HCT116 (cell line): ENCODE measurements at regions of chr1 and their contacts with region 1.

Region 1: DNA sequence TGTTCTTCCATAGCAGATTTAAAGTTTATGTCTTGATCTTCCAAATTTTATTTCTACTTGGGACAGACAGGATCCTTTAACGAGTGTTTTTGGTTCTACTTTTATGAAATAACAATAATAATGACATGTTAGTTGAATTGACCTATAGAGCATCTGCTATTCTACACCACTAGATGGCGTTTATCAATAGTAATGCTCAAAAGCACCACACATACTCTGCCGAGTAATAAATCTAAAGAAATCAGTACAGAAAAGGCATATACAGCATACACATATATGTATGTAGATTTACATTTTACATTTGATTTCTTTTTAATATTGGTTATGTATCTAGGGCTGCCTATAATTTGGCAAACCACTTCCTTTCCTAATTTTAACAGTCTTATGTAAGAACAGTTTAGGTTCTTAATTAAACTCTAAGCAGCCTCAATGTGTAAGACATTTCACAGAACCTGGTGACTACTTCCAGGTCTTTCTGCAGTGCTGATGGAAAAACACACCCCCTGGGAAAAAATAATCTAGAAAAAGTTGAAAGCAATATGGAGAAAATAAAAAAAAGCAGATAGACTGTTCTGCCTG is 5.9 kb upstream of the SIPA1L2 start:
- DNase-seq: no peak
- ATAC-seq: peak; percentile 91
- H3K4me3 ChIP-seq: no peak overlapping the region
- H3K27ac ChIP-seq: no peak overlapping the region
- H3K4me1 ChIP-seq: peaks cover 3 to 4% of the 10 kb centered on the region in 2 experiments; a peak in 3 of 4 replicates
- H3K27me3 ChIP-seq: no peaks in the 10 kb centered on the region
- CTCF ChIP-seq: peak; percentile 63 to 83 (median 67)
- POLR2A ChIP-seq: no peak
- RAD21 ChIP-seq: peak; percentile 83

Region 2: DNA sequence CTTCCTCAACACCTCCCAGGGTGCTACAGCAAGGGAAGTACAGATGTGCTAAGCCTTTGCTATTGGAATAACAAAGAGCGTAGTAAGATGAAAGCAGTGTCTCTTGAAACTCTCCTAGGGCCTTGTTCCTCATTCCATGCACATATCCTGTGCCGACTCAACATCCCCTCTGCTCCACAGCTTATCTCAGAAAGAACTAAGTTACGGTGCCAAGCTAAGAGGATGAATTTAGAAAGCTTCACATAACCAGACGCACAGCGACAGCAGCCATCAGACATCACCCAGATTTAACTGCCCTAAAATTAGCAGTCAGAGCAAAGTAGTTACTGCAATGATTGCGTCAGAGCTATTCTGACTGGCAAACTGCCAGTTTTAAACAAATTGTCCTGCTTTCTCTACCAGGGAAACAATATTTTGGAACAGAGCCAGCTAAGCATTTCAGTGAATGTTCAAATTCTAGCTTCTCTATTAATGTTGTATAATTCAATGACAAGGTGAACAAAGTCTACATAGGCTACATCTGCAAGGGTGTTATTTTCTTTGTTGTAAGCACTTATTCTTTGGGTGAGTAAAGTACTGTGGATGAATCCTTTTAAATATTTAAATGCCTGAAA is 15.4 kb before region 1 on chr1:
- CTCF ChIA-PET with region 1: no interaction called
- POLR2A ChIA-PET with region 1: no interaction called
- RAD21 ChIA-PET with region 1: no interaction called
- intact Hi-C with region 1: no loop called
- DNase-seq: no peak
- ATAC-seq: no peak
- H3K4me3 ChIP-seq: no peak overlapping the region
- H3K27ac ChIP-seq: no peak overlapping the region
- H3K4me1 ChIP-seq: peaks cover 32 to 60% of the 10 kb centered on the region in 2 experiments; a peak in 3 of 4 replicates
- H3K27me3 ChIP-seq: no peaks in the 10 kb centered on the region
- CTCF ChIP-seq: no peak
- POLR2A ChIP-seq: no peak
- RAD21 ChIP-seq: 0 out of 2 replicates have a peak, but pooled peaks have one; percentile 13

Region 3: DNA sequence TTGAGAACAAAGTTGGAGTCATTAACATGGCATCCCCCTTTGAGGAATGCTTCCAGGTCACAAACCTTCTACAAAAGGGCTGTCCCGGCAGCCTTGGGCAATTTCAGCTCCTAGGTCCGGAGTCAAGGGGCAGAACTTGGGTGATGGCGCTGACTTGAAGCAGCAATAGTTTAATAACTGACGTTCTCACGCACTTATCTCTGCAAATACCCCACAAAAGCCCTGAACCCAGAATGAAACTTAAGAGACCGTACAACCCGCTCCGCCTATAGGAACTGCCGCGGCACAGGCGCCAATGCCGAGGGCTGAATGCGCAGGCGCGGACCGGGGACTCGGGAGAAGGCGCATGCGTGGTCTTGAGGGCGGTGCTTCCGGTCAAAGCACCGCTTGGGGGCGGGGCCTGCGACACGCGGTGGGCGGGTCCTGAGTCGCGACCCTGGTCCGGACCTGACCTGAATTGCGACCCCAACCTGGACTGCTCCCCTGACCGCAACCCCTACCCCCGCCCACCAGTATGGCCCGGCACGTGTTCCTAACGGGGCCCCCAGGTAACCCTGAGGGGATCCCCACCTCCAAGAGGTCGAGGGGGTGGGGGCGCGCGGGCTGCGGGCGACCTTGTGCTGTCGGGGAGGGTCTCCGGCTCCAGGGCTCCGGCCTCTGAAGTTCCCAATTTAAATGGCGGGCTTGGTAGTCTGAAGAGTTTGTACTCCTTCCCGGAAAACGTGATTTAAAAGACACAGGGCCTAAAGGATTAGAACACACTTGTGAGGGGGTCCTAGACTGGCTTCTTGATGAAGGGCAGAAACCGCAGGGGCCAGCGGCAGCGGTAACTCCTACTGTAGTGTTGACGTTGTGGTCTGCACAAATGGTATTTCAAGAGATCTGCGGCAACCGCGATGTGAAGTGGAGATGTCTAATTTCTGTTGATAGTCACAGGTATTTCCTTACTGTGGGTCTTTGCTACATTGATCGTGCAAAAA is 314.6 kb after region 1 on chr1 and contains the start of gene NTPCR:
- CTCF ChIA-PET with region 1: no interaction called
- POLR2A ChIA-PET with region 1: no interaction called
- RAD21 ChIA-PET with region 1: interaction called in 1 of 2 experiments, 3 read pairs
- intact Hi-C with region 1: loop called (anchors 2 kb)
- DNase-seq: peak; percentile 83
- ATAC-seq: peak; percentile 84
- H3K4me3 ChIP-seq: peak within 1 kb of the TSS; percentile 51 to 72
- H3K27ac ChIP-seq: peak within 1 kb of the TSS; percentile 56
- H3K4me1 ChIP-seq: peaks cover 23 to 33% of the 10 kb centered on the region in 2 experiments
- H3K27me3 ChIP-seq: no peaks in the 10 kb centered on the region
- CTCF ChIP-seq: no peak
- POLR2A ChIP-seq: peak; percentile 79
- RAD21 ChIP-seq: peak; percentile 12; the same call in 1 of the 2 replicates
- total RNA-seq, gene NTPCR: 34.2 TPM

Region 4: DNA sequence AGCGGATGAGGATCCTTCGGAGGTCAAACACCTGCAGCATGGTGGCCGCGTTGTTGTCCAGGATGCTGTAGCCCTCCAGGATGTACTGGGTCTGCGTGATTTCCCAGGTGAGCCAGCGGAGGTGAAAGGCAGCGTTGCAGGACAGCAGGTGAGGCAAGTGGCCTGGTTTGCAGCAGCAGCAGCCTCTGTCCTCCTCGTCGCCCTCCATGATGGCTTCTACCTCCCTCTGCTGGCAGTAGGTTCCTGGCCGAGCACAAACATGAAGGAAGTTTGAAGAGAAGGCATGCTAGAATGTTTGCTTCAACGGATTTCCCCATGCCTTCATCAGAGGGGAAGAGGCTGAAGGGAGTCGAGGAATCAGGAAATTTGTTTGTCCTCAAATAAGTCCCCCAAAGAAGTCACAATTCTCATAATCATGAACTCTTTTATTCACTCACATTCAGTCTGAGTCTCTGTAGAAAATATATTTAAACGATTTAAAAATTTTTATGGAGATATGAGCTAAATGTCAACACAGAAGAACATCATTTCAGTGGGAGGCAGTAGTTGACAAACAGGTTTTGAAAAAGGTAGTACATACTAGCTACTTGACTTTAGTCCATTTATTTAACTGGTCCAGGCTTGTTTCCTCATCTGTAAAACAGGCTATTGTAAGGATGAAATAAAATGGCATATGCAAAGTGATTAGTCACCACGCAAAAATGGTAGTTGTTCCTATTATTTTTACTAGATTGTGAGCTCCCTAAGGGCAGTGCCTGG is 389.5 kb after region 1 on chr1:
- CTCF ChIA-PET with region 1: interaction called, 3 read pairs
- POLR2A ChIA-PET with region 1: no interaction called
- RAD21 ChIA-PET with region 1: no interaction called
- intact Hi-C with region 1: loop called (anchors 2 kb)
- DNase-seq: no peak
- ATAC-seq: peak; percentile 63
- H3K4me3 ChIP-seq: no peak overlapping the region
- H3K27ac ChIP-seq: no peak overlapping the region
- H3K4me1 ChIP-seq: peaks cover 0 to 3% of the 10 kb centered on the region in 2 experiments; a peak in 1 of 4 replicates
- H3K27me3 ChIP-seq: no peaks in the 10 kb centered on the region
- CTCF ChIP-seq: peak; percentile 28 to 46 (median 44); a peak in 5 of 6 replicates
- POLR2A ChIP-seq: no peak
- RAD21 ChIP-seq: peak; percentile 60

Region 5: GRCh38 chr1:233172227-233172626 is 536.4 kb after region 1 on chr1:
- CTCF ChIA-PET with region 1: no interaction called
- POLR2A ChIA-PET with region 1: no interaction called
- RAD21 ChIA-PET with region 1: no interaction called
- intact Hi-C with region 1: loop called (anchors 5 kb)
- DNase-seq: peak; percentile 31
- ATAC-seq: peak; percentile 71
- H3K4me3 ChIP-seq: no peak overlapping the region
- H3K27ac ChIP-seq: no peak overlapping the region
- H3K4me1 ChIP-seq: no peaks in the 10 kb centered on the region
- H3K27me3 ChIP-seq: no peaks in the 10 kb centered on the region
- CTCF ChIP-seq: peak; percentile 33 to 52 (median 39); a peak in 4 of 6 replicates
- POLR2A ChIP-seq: no peak
- RAD21 ChIP-seq: peak; percentile 71

Region 6: GRCh38 chr1:233240829-233241682 is 605.2 kb after region 1 on chr1:
- CTCF ChIA-PET with region 1: no interaction called
- POLR2A ChIA-PET with region 1: no interaction called
- RAD21 ChIA-PET with region 1: no interaction called
- intact Hi-C with region 1: loop called (anchors 1 kb)
- DNase-seq: no peak
- ATAC-seq: peak; percentile 75
- H3K4me3 ChIP-seq: no peak overlapping the region
- H3K27ac ChIP-seq: no peak overlapping the region
- H3K4me1 ChIP-seq: peaks cover 3 to 12% of the 10 kb centered on the region in 2 experiments; a peak in 1 of 4 replicates
- H3K27me3 ChIP-seq: no peaks in the 10 kb centered on the region
- CTCF ChIP-seq: peak; percentile 62 to 75 (median 65); a peak in 5 of 6 replicates
- POLR2A ChIP-seq: no peak
- RAD21 ChIP-seq: peak; percentile 84